Pancreas (tissue), 10 donors: ENCODE measurements at regions of chr6 and their contacts with region 1.

Region 1: GRCh38 chr6:110944681-110945151 is 13.8 kb upstream of the GTF3C6 start:
- DNase-seq: no peak
- ATAC-seq: peak in 2 of 4 donors; percentile 28 to 74
- H3K4me3 ChIP-seq: no peak overlapping the region
- H3K27ac ChIP-seq: no peak overlapping the region
- H3K4me1 ChIP-seq: no peaks in the 10 kb centered on the region
- H3K27me3 ChIP-seq: no peaks in the 10 kb centered on the region
- CTCF ChIP-seq: no peak

Region 2: GRCh38 chr6:110609101-110609500 is 335.6 kb before region 1 on chr6:
- intact Hi-C with region 1: no loop called
- DNase-seq: no peak
- ATAC-seq: no peak
- H3K4me3 ChIP-seq: no peak overlapping the region
- H3K27ac ChIP-seq: no peak overlapping the region
- H3K4me1 ChIP-seq: no peaks in the 10 kb centered on the region
- H3K27me3 ChIP-seq: no peaks in the 10 kb centered on the region
- CTCF ChIP-seq: no peak

Region 3: GRCh38 chr6:110682460-110682853 is 262.3 kb before region 1 on chr6:
- intact Hi-C with region 1: loop called in 1 of 3 experiments (anchors 10 kb)
- DNase-seq: peak in 3 of 6 donors; percentile 56 to 77 (median 67)
- ATAC-seq: peak; percentile 95 to 99 (median 99)
- H3K4me3 ChIP-seq: no peak overlapping the region
- H3K27ac ChIP-seq: no peak overlapping the region
- H3K4me1 ChIP-seq: peaks cover 0 to 3% (median 0%) of the 10 kb centered on the region in 3 donors
- H3K27me3 ChIP-seq: no peaks in the 10 kb centered on the region
- CTCF ChIP-seq: peak in 3 of 4 donors; percentile 20 to 63 (median 50)